Naive thymus-derived CD8-positive, alpha-beta T cell (primary cell): ENCODE measurements at regions of chr1 and their contacts with region 1.

Region 1: DNA sequence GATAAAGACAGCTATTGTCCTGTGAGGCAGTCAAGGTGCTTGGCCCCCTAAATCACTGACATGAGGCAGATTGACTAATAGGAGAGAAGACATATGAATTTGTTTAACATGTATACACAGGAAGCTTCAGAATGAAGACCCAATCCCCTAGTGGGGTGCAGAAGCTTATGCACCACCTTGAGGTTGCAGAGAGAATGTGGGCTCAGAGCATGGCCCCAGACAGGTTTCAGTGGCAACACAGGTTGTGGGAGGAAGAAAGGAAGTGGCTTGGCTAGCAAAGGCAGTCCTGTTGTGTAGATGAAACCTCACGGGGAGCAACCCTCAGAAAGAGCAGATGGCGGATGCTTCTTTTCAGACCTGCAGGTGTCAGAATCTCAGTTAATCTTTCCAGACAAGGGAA is 37.0 kb upstream of the PARP1 start:
- DNase-seq: peak in 9 of 10 donors; percentile 45 to 90 (median 77)
- ATAC-seq: peak; percentile 99 to 100
- H3K4me3 Mint-ChIP-seq: peak overlapping the region; percentile 24 to 69 (median 62)
- H3K27ac Mint-ChIP-seq: peak overlapping the region; percentile 1 to 93 (median 82)
- H3K4me1 Mint-ChIP-seq: peaks cover 24 to 37% (median 35%) of the 10 kb centered on the region in 4 donors
- H3K27me3 Mint-ChIP-seq: no peaks in the 10 kb centered on the region

Region 2: GRCh38 chr1:226397011-226397926 is 47.6 kb before region 1 on chr1:
- POLR2A ChIA-PET with region 1: no interaction called
- DNase-seq: no peak
- ATAC-seq: no peak
- H3K4me3 Mint-ChIP-seq: no peak overlapping the region
- H3K27ac Mint-ChIP-seq: peak overlapping the region in 6 of 10 donors; percentile 9 to 61 (median 40)
- H3K4me1 Mint-ChIP-seq: peaks cover 27 to 65% (median 56%) of the 10 kb centered on the region in 4 donors
- H3K27me3 Mint-ChIP-seq: no peaks in the 10 kb centered on the region

Region 3: DNA sequence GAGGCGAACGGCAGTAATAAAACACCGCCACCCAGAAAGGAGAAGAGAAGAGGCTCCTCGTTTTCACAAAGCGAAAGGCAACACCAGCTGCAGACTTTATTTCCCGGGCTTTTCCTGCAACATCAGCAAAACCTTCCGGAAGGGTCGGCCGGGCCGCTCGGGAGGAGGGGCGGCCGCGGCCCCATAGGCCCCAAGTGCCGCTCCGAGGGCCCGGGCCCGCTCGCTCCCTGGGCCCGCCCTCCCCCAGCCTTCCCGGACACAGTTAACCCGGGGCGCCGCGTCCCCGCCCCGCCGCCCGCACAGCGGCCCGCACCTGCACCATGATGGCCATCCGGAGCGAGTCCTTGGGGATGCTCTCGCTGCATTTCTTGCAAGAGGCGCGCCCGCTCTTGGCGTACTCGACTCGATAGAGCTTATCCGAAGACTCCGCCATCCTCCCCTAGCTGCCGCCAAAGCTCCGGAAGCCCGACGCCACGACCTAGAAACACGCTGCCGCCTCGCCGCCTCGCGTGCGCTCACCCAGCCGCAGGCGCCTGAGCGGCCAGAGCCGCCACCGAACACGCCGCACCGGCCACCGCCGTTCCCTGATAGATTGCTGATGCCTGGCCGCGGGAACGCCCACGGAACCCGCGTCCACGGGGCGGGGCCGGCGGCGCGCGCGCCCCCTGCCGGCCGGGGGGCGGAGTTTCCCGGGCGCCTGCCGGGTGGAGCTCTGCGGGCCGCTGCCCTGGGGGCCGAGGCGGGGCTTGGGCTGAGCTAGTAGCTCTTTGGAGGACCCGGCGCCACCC is 37.2 kb before region 1 on chr1 and contains the start of gene PARP1:
- POLR2A ChIA-PET with region 1: interaction called, 11 read pairs
- DNase-seq: peak; percentile 79 to 93 (median 88)
- ATAC-seq: peak; percentile 85 to 86
- H3K4me3 Mint-ChIP-seq: peak within 1 kb of the TSS; percentile 92 to 100 (median 97)
- H3K27ac Mint-ChIP-seq: peak within 1 kb of the TSS; percentile 87 to 98 (median 96)
- H3K4me1 Mint-ChIP-seq: peaks cover 31 to 53% (median 50%) of the 10 kb centered on the region in 4 donors
- H3K27me3 Mint-ChIP-seq: no peaks in the 10 kb centered on the region
- polyA plus RNA-seq, gene PARP1: 98.6 to 128 (median 121) TPM

Region 4: GRCh38 chr1:226424228-226425003 is 20.5 kb before region 1 on chr1:
- POLR2A ChIA-PET with region 1: interaction called, 42 read pairs
- DNase-seq: peak in 3 of 10 donors; percentile 42 to 58 (median 56)
- ATAC-seq: peak; percentile 61 to 65
- H3K4me3 Mint-ChIP-seq: peak overlapping the region in 2 of 10 donors; percentile 33 to 58
- H3K27ac Mint-ChIP-seq: peak overlapping the region in 2 of 10 donors; percentile 25 to 70
- H3K4me1 Mint-ChIP-seq: peaks cover 18 to 37% (median 33%) of the 10 kb centered on the region in 4 donors
- H3K27me3 Mint-ChIP-seq: no peaks in the 10 kb centered on the region

Region 5: DNA sequence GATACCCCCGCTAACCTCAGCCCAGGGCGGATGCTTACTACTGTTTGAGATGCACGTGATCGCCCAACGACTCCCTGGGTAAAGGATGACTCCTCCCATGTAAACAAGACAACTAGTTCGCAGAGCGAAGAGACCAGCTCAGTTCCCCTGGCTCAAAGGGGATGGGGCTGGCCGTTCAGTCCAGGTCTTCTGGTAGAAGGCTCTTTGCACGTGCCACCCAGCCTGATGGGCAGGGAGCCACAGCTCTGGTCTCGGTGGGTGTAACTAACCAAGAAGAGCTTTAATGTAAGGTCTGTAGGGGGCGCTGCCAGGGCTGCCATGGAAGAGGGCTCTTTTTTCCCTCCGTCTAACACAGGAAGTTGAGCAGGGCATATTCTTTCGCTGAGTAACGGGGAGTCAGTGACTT is 12.4 kb after region 1 on chr1:
- POLR2A ChIA-PET with region 1: interaction called, 29 read pairs
- DNase-seq: peak; percentile 11 to 78 (median 60)
- ATAC-seq: peak; percentile 92 to 98
- H3K4me3 Mint-ChIP-seq: peak overlapping the region; percentile 46 to 90 (median 86)
- H3K27ac Mint-ChIP-seq: peak overlapping the region; percentile 41 to 93 (median 84)
- H3K4me1 Mint-ChIP-seq: peaks cover 11 to 17% (median 15%) of the 10 kb centered on the region in 4 donors
- H3K27me3 Mint-ChIP-seq: peaks cover 0 to 1% (median 0%) of the 10 kb centered on the region in 5 donors